ENCODE measurements at regions of chrX and their contacts with region 1.

Region 1: GRCh38 chrX:24054182-24055042 is at the start of gene EIF2S3:
- DNase-seq: peak; percentile 92
- ATAC-seq: peak; percentile 86
- H3K4me3 ChIP-seq: no peak within 1 kb of the TSS
- H3K27ac ChIP-seq: no peak within 1 kb of the TSS; the same call in 1 of the 2 replicates
- H3K4me1 ChIP-seq: no peaks in the 10 kb centered on the region
- H3K27me3 ChIP-seq: no peaks in the 10 kb centered on the region
- CTCF ChIP-seq: peak; percentile 57 to 62 (median 60)
- POLR2A ChIP-seq: peak; percentile 61
- RAD21 ChIP-seq: peak; percentile 44
- total RNA-seq, gene EIF2S3: 273 TPM

Region 2: DNA sequence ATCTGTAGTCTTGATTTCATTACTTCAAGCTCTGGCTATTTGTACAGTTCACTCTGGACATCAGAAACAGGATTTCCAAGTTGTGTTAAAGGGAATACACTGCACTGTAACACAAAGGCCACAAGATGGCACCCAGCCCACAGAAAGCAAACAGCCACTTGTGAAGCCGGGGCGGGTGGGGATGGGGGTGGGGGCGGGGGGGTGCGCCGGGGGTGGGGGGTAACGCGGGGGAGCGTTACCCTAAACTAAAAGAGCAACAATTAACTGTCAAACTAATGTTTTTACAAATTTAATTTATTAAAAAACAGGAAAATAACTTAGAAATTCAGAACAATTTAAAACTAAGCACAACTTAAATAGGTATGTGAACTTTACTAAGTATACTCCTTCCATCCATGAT is 359.8 kb before region 1 on chrX:
- CTCF ChIA-PET with region 1: no interaction called
- POLR2A ChIA-PET with region 1: no interaction called
- RAD21 ChIA-PET with region 1: no interaction called
- intact Hi-C with region 1: loop called (anchors 10 kb)
- DNase-seq: peak; percentile 21
- ATAC-seq: peak; percentile 82
- H3K4me3 ChIP-seq: no peak overlapping the region
- H3K27ac ChIP-seq: no peak overlapping the region
- H3K4me1 ChIP-seq: no peaks in the 10 kb centered on the region
- H3K27me3 ChIP-seq: no peaks in the 10 kb centered on the region
- CTCF ChIP-seq: peak; percentile 21 to 49 (median 44); a peak in 3 of 6 replicates
- POLR2A ChIP-seq: no peak
- RAD21 ChIP-seq: peak; percentile 65

Region 3: DNA sequence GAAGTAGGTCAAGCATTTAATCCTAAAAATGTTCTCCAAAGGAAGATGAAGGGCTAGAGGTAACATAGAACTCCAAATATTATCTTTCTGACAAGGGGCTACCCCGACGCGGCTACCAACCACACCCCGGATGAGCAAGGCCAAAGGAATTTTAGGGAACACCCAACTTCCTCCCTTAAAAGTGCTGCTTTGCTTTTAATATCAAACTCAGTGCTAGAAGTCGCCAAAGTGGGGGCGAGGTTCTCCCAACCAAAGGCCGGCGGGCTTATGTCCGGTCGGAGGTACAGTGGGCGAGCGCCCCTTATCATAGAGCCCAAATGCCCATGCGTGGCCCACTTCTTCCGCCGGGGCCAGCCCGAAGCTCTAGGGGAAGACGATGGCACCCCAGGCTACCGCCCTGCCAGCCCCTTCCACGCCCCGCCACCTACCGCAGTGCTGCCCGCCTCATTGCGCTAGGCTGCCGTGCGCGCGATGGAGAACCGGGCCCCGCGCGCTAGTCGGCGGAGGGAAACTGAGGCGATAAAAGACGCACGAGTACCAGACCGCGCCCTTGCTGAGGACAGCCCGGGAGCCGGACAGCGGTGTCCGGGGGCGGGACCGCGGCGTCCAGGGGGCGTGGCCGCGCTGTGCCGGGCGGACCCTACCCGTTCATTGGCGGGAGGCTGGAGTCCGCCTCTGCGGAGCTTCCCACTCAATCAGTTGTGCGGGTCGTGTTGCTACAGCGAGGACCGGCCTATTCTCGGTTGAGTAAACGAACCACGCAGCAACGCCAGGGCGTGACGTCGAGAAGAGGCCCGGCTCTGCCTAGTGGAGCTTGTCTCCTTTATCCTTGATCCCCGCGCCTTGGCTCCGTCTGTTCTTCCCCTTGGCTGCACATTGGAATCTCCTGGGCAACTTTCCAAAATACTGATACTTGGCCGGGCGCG is 311.5 kb before region 1 on chrX and contains the start of gene ACOT9:
- CTCF ChIA-PET with region 1: interaction called, 3 read pairs
- POLR2A ChIA-PET with region 1: no interaction called
- RAD21 ChIA-PET with region 1: no interaction called
- intact Hi-C with region 1: loop called (anchors 5 kb)
- DNase-seq: peak; percentile 87
- ATAC-seq: peak; percentile 95
- H3K4me3 ChIP-seq: peak within 1 kb of the TSS; percentile 66 to 75
- H3K27ac ChIP-seq: peak within 1 kb of the TSS; percentile 90
- H3K4me1 ChIP-seq: peaks cover 0 to 12% of the 10 kb centered on the region in 2 experiments; a peak in 3 of 4 replicates
- H3K27me3 ChIP-seq: no peaks in the 10 kb centered on the region
- CTCF ChIP-seq: no peak
- POLR2A ChIP-seq: peak; percentile 40
- RAD21 ChIP-seq: no peak
- total RNA-seq, gene ACOT9: 59.7 TPM

Region 4: DNA sequence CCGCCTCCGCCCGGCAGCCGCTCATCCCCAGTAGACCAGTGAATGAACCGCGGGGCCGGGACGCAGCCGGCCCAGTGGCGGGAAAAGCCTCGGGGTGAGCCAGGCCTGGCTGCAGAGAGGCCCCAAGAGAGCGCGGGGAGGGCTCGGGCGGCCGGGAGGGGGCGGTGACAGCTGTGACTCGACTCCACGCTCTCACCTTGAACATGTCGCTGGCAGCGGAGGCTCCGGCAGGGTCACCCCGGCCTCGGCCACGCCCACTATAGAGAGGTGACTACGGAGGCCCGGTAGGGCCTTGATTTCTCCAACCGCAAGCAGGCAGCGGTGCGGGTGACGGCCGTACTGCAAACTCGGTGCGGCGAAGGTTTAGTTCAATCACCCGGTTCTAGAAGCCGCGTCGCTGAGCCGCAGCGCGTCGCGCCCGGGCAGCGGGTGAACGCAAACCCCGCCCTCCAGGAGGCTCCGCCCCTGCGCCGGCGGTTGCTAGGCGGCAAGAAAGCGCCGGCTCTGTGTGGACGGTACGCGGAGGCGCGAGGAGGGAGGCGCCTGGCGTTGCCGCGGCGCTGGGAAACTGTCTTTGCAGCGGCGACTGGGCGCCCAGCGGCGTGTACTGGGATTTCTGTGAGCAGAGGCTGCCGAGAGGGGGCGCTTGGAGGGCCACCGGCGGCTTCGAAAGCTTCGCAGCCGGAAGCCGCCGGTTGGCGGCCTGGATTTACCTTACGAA is 146.8 kb before region 1 on chrX and contains the starts of genes APOO and CXorf58:
- CTCF ChIA-PET with region 1: interaction called, 9 read pairs
- POLR2A ChIA-PET with region 1: no interaction called
- RAD21 ChIA-PET with region 1: no interaction called
- intact Hi-C with region 1: loop called (anchors 1 kb)
- DNase-seq: peak; percentile 83
- ATAC-seq: peak; percentile 93
- H3K4me3 ChIP-seq: peak within 1 kb of the TSS; percentile 76
- H3K27ac ChIP-seq: peak within 1 kb of the TSS; percentile 74
- H3K4me1 ChIP-seq: peaks cover 0 to 15% of the 10 kb centered on the region in 2 experiments; a peak in 2 of 4 replicates
- H3K27me3 ChIP-seq: no peaks in the 10 kb centered on the region
- CTCF ChIP-seq: peak in 2 of 3 experiments; percentile 66 to 80; a peak in 4 of 6 replicates
- POLR2A ChIP-seq: no peak
- RAD21 ChIP-seq: no peak
- total RNA-seq, gene APOO: 34.5 TPM
- total RNA-seq, gene CXorf58: not detected

Region 5: GRCh38 chrX:24024819-24025740 is 29.3 kb before region 1 on chrX:
- CTCF ChIA-PET with region 1: no interaction called
- POLR2A ChIA-PET with region 1: interaction called, 13 read pairs
- RAD21 ChIA-PET with region 1: no interaction called
- intact Hi-C with region 1: loop called (anchors 2 kb)
- DNase-seq: peak; percentile 60
- ATAC-seq: peak; percentile 92
- H3K4me3 ChIP-seq: peak overlapping the region; percentile 67 to 76
- H3K27ac ChIP-seq: peak overlapping the region; percentile 80
- H3K4me1 ChIP-seq: peaks cover 0 to 15% of the 10 kb centered on the region in 2 experiments; a peak in 2 of 4 replicates
- H3K27me3 ChIP-seq: no peaks in the 10 kb centered on the region
- CTCF ChIP-seq: no peak
- POLR2A ChIP-seq: peak; percentile 86
- RAD21 ChIP-seq: no peak

Measured in HCT116 (cell line).